ENCODE measurements at regions of chr12 and their contacts with region 1.

Region 1: DNA sequence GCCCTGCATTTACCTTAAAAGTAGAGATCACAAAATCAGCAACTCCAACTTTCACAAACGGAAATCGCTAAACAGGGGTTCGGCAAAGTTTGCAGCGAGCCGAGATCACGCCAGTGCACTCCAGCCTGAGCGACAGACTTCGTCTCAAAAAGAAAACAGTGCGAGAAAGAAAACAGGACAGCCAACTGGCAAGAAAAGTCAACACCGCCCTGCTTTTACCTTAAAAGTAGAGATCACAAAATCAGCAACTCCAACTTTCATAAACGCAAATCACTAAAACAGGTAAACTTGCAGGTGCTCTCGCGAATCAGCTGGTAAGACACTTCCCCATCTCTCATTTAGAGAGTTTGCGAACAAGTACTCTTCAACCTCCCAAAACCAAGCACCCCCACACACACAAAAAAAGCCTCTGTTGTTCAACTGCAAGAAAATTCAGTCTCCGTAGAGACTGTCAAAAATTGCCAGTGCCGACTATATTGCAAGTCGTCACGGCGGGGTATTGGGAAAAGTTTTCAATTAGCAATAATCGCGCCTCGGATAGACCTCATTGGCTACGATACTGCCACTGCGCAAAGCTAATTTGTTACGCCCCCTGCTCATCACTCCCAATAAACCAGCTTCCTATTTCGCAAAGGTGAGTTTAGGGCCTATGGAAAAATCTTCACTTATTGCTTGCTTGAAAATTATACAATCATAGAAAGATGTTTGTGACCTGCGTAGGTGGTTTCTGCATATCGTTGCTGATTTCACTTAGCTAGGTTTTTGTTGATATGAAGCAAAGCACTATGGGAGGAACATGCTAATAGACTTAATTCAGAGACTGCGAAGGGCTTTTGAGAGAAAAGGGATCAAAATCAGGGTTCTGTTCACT is at the start of gene RNU4-1:
- DNase-seq: peak; percentile 88
- ATAC-seq: peak; percentile 69
- H3K4me3 Mint-ChIP-seq: no peak within 1 kb of the TSS
- H3K27ac Mint-ChIP-seq: no peak within 1 kb of the TSS
- H3K4me1 Mint-ChIP-seq: peaks cover 7% of the 10 kb centered on the region
- H3K27me3 Mint-ChIP-seq: no peaks in the 10 kb centered on the region
- total RNA-seq, gene RNU4-1: 323 to 1,150 TPM

Region 2: DNA sequence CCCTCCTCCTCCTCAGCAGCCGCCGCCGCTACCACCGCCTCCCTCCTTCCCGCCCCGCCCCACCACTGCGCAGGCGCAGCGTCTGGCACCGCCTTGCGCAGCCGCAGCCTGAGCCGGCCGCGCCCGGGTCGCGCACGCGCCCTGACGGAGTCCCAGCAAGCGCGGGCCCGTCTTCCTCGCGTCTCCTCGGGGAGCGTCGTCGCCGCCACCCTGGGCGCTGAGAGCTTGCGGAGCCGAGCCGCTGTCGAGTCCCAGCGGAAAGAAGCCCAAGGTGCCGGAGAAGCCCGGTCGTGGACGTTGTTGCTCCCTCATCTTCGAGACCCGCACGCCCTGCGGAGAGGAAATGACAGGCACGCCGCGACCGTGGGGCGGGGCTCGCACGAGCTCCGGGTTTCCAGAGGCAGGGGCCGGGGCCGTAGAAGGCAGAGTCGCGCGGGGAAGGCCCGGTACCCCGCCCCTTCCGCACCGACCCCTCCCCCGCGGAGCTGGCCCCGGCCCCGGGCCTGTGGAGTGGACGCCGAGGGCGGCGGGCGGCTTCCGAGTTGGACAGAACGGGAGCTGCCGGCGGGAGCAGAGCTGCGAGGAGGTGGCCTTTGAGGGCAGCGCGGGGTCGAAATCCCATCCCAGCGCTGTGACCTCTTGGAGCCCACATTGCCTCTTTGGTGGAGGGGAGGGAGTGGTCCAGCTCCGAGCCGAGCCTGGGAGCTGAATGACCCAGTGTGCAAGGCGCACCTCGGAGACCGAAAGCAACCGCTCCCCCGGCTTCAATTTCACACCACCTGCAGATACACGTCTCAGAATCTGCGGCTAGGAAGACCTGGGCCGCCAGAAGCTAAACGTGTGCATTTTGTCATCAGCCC is 175.9 kb before region 1 on chr12:
- CTCF ChIA-PET with region 1: interaction called, 3 read pairs
- POLR2A ChIA-PET with region 1: interaction called, 21 read pairs
- intact Hi-C with region 1: loop called (anchors 2 to 5 kb)
- DNase-seq: peak; percentile 99
- ATAC-seq: peak; percentile 68
- H3K4me3 Mint-ChIP-seq: peak overlapping the region; percentile 85
- H3K27ac Mint-ChIP-seq: peak overlapping the region; percentile 87
- H3K4me1 Mint-ChIP-seq: peaks cover 77% of the 10 kb centered on the region
- H3K27me3 Mint-ChIP-seq: no peaks in the 10 kb centered on the region

Region 3: DNA sequence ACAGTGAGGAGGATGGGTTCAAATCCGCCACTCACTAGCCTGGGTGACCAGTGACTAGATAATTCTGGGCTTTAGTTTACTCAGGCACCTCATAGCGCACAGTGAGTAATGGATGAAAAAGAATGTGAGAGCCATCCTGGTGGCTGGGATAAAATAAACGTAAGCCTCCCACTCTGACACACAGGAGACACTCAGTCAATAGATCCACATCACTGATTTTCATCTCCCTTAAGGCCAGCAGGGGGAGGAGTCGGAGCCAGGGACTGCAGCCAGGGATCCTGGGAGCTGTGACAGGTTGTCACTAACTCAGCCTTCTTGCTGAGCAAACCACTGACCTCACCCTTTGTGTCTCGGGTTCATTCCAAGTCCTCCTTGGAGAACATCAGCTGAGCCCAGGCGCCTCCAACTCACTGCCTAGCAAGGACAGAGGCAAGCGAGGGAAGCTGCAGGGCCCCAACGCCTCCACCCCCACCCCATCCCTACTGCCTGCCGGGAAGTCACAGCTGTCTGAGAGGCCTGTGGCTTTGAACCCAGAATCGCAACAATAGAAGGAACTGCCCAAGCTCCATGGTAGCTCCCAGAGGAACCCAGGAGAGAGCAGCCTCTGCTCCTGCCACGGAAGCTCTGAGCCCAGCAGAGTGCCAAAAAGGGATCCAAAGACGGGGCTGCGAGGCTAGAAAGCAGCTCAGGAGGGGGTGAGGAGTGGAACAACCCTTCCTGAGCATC is 58.1 kb before region 1 on chr12:
- CTCF ChIA-PET with region 1: interaction called, 72 read pairs
- POLR2A ChIA-PET with region 1: interaction called, 275 read pairs
- intact Hi-C with region 1: no loop called
- DNase-seq: no peak
- ATAC-seq: no peak
- H3K4me3 Mint-ChIP-seq: no peak overlapping the region
- H3K27ac Mint-ChIP-seq: peak overlapping the region; percentile 65
- H3K4me1 Mint-ChIP-seq: peaks cover 85% of the 10 kb centered on the region
- H3K27me3 Mint-ChIP-seq: no peaks in the 10 kb centered on the region

Region 4: DNA sequence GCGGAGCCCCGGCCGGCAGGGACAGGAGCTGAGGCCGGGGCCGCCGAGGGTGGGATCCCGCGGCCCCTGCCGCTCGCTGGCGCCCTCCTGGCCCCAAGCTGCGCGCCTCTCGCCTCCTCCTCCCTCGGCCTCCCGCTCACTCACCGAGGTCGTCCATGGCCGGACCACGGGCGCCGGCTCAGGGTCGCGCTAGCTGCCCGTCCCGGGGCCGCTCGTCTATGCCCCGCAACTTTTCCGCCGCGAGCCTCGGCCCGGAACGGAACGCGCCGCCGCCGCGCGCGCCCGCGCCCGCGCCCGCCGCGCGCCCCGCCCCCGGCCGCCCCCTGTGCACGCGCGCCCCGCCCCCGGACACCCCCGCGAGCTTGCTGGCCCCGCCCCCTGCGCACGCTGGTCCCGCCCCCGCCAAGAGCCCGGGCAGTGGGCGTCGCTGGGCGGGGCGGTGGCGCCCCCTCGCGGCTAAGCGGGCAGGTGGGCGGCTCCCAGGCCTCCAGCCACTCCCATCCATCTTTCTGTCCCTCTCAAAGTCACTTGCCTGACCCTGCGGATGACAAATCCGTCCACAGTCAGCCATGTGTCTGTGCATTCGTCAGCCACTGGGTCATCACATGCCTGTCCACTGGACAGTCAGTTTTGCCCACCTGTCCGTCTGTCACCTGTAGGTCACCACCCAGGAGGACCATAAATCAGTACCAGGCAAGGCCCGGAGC is 27.3 kb before region 1 on chr12 and contains the start of gene PXN:
- CTCF ChIA-PET with region 1: interaction called, 16 read pairs
- POLR2A ChIA-PET with region 1: interaction called, 117 read pairs
- intact Hi-C with region 1: no loop called
- DNase-seq: peak; percentile 95
- ATAC-seq: peak; percentile 79
- H3K4me3 Mint-ChIP-seq: peak within 1 kb of the TSS; percentile 95
- H3K27ac Mint-ChIP-seq: peak within 1 kb of the TSS; percentile 85
- H3K4me1 Mint-ChIP-seq: peaks cover 46% of the 10 kb centered on the region
- H3K27me3 Mint-ChIP-seq: no peaks in the 10 kb centered on the region
- total RNA-seq, gene PXN: 74.5 to 104 TPM

Region 5: GRCh38 chr12:120469450-120470149 is 176.7 kb after region 1 on chr12 and contains the start of gene SRSF9:
- CTCF ChIA-PET with region 1: no interaction called
- POLR2A ChIA-PET with region 1: interaction called, 4 read pairs
- intact Hi-C with region 1: loop called in 1 of 2 experiments (anchors 1 kb)
- DNase-seq: peak; percentile 98
- ATAC-seq: peak; percentile 94
- H3K4me3 Mint-ChIP-seq: peak within 1 kb of the TSS; percentile 79
- H3K27ac Mint-ChIP-seq: peak within 1 kb of the TSS; percentile 88
- H3K4me1 Mint-ChIP-seq: peaks cover 40% of the 10 kb centered on the region
- H3K27me3 Mint-ChIP-seq: no peaks in the 10 kb centered on the region
- total RNA-seq, gene SRSF9: 140 to 209 TPM

Region 6: GRCh38 chr12:120892265-120892664 is 599.4 kb after region 1 on chr12:
- CTCF ChIA-PET with region 1: no interaction called
- POLR2A ChIA-PET with region 1: no interaction called
- intact Hi-C with region 1: no loop called
- DNase-seq: no peak
- ATAC-seq: peak; percentile 74
- H3K4me3 Mint-ChIP-seq: no peak overlapping the region
- H3K27ac Mint-ChIP-seq: peak overlapping the region; percentile 26
- H3K4me1 Mint-ChIP-seq: peaks cover 54% of the 10 kb centered on the region
- H3K27me3 Mint-ChIP-seq: no peaks in the 10 kb centered on the region

Measured in activated CD4-positive, alpha-beta T cell treated with anti-CD3 and anti-CD28 coated beads for 36 hours (primary cell).